ENCODE measurements at regions of chr11 and their contacts with region 1.

Region 1: DNA sequence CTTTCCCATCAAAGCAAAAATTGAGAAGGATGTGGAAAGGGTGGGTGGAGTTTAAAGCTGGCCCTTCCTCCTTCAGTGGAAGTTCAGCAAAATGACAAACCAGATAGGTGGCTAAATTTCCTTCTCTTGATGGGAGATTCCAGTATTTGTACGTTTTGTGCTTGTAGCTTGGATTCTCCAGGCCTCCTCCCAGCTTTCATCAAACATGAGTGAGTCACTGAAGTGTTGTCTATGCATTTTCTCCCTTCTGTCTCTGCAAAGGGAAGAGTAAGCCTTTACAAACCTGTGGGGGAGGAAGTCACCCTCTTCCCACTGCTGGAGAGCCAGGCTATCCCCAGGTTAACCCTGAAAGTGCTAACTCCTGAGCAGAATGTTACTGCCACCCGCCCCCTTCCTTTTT is 6.4 kb downstream of the MARK2 start:
- DNase-seq: no peak
- ATAC-seq: no peak
- H3K4me3 ChIP-seq: no peak overlapping the region
- H3K4me3 Mint-ChIP-seq: no peak overlapping the region
- H3K27ac ChIP-seq: peak overlapping the region in 1 of 2 donors; percentile 43
- H3K27ac Mint-ChIP-seq: no peak overlapping the region
- H3K4me1 ChIP-seq: peaks cover 25 to 33% of the 10 kb centered on the region in 2 donors
- H3K4me1 Mint-ChIP-seq: peaks cover 63% of the 10 kb centered on the region
- H3K27me3 ChIP-seq: no peaks in the 10 kb centered on the region
- H3K27me3 Mint-ChIP-seq: no peaks in the 10 kb centered on the region
- CTCF ChIP-seq: no peak

Region 2: GRCh38 chr11:63826471-63827190 is 18.7 kb before region 1 on chr11:
- CTCF ChIA-PET with region 1: no interaction called
- POLR2A ChIA-PET with region 1: no interaction called
- intact Hi-C with region 1: no loop called
- DNase-seq: no peak
- ATAC-seq: no peak
- H3K4me3 ChIP-seq: no peak overlapping the region
- H3K4me3 Mint-ChIP-seq: no peak overlapping the region
- H3K27ac ChIP-seq: no peak overlapping the region
- H3K27ac Mint-ChIP-seq: no peak overlapping the region
- H3K4me1 ChIP-seq: no peaks in the 10 kb centered on the region
- H3K4me1 Mint-ChIP-seq: no peaks in the 10 kb centered on the region
- H3K27me3 ChIP-seq: no peaks in the 10 kb centered on the region
- H3K27me3 Mint-ChIP-seq: no peaks in the 10 kb centered on the region
- CTCF ChIP-seq: no peak

Region 3: GRCh38 chr11:63945477-63946163 is 100.3 kb after region 1 on chr11:
- CTCF ChIA-PET with region 1: interaction called, 254 read pairs
- POLR2A ChIA-PET with region 1: no interaction called
- intact Hi-C with region 1: no loop called
- DNase-seq: peak; percentile 63
- ATAC-seq: peak; percentile 63
- H3K4me3 ChIP-seq: no peak overlapping the region
- H3K4me3 Mint-ChIP-seq: no peak overlapping the region
- H3K27ac ChIP-seq: no peak overlapping the region
- H3K27ac Mint-ChIP-seq: peak overlapping the region; percentile 15
- H3K4me1 ChIP-seq: peaks cover 12 to 14% of the 10 kb centered on the region in 2 donors
- H3K4me1 Mint-ChIP-seq: peaks cover 20% of the 10 kb centered on the region
- H3K27me3 ChIP-seq: no peaks in the 10 kb centered on the region
- H3K27me3 Mint-ChIP-seq: no peaks in the 10 kb centered on the region
- CTCF ChIP-seq: peak; percentile 61

Measured in B cell (primary cell).